Activated naive CD4-positive, alpha-beta T cell treated with anti-CD3 and anti-CD28 coated beads for 36 hours (primary cell): ENCODE measurements at regions of chr14 and their contacts with region 1.

Region 1: GRCh38 chr14:24013654-24014514 is 25.2 kb downstream of the DHRS4L2 start:
- DNase-seq: peak; percentile 66
- H3K4me3 Mint-ChIP-seq: no peak overlapping the region
- H3K27ac Mint-ChIP-seq: no peak overlapping the region
- H3K4me1 Mint-ChIP-seq: peaks cover 25% of the 10 kb centered on the region
- H3K27me3 Mint-ChIP-seq: no peaks in the 10 kb centered on the region

Region 2: DNA sequence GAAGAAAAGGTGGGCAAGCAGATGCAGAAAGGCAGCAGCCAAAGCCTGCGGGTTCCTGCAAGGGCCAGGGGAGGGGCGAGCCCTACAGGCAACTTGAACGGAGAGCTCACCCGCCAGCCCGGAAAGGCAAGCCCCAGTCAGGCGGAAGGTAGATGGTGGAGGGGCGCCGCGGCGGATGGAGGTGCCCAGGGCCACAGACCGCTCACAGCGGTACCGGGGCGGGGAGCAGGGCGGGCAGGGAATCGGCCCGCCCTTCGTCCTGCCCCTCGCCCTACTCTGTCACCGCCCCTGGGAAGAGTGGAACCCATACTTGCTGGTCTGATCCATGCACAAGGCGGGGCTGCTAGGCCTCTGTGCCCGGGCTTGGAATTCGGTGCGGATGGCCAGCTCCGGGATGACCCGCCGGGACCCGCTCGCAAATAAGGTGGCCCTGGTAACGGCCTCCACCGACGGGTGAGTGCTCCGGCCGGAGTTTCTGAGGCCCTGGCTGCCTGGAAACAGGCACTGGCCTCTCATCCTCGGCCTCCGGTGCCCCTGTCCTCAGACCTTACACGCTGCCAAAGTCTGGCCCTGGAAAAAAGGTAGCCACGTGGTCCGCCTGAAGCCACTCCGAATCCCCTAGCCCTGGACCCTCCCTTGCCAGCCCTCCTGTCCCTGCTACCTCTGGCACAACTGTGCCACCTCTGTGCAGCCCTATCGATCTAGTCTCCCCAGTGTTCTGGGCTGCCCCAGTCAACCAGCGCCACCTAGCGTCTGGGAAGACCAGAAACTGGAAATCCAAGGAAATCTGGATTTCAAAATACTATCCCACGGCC is 60.2 kb before region 1 on chr14 and contains the start of gene DHRS4:
- CTCF ChIA-PET with region 1: no interaction called
- intact Hi-C with region 1: loop called (anchors 10 kb)
- DNase-seq: peak; percentile 87
- H3K4me3 Mint-ChIP-seq: peak within 1 kb of the TSS; percentile 99
- H3K27ac Mint-ChIP-seq: peak within 1 kb of the TSS; percentile 94
- H3K4me1 Mint-ChIP-seq: peaks cover 22% of the 10 kb centered on the region
- H3K27me3 Mint-ChIP-seq: no peaks in the 10 kb centered on the region
- total RNA-seq, gene DHRS4: 22.8 to 24.0 TPM

Region 3: DNA sequence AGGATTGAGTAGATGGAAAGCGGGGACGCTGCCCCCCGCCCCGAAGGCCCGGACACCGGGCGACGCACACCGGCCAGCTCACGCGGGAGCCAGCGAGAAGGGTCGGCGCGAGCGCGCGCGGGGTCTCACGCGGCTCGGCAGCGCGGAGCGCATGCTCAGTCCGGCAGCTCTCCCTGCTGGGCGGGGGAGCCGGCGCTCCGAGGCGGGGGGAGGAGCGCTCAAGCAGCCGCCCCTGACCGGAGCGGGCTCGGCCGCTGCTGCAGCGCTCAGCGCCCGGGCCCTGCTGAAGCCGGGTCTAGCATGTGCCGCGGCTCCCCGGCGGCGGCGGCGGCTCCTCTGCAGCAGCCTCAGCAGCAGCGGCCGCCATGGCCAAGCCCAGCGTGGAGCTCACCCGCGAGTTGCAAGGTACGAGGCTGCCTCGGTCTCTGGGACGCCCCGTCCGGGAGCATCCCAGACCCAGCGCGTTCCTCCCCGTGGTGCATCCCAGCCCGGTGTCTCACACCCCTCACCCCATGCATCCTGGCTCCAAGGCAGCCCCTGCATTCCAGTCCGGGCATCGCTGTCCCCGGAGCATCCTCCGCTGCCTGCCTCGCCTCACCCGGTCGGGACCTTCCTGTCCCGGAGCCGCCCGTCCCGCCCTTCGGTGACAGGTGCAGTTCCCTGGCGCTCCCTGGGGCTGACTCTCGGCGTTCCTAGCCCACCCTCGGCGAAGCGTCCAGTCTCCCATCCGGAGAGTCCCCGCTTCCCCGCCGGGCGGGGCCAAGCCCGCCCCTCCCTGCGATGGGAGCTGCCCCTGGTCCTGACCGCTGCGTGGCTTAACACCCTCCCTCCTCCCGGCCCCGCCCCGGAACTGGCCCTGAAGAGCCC is 38.1 kb after region 1 on chr14 and contains the start of gene CARMIL3:
- CTCF ChIA-PET with region 1: interaction called, 6 read pairs
- intact Hi-C with region 1: loop called (anchors 1 kb)
- DNase-seq: peak; percentile 60
- H3K4me3 Mint-ChIP-seq: peak within 1 kb of the TSS; percentile 65
- H3K27ac Mint-ChIP-seq: peak within 1 kb of the TSS; percentile 28
- H3K4me1 Mint-ChIP-seq: peaks cover 18% of the 10 kb centered on the region
- H3K27me3 Mint-ChIP-seq: peaks cover 2% of the 10 kb centered on the region
- total RNA-seq, gene CARMIL3: 0.48 to 0.99 TPM

Region 4: DNA sequence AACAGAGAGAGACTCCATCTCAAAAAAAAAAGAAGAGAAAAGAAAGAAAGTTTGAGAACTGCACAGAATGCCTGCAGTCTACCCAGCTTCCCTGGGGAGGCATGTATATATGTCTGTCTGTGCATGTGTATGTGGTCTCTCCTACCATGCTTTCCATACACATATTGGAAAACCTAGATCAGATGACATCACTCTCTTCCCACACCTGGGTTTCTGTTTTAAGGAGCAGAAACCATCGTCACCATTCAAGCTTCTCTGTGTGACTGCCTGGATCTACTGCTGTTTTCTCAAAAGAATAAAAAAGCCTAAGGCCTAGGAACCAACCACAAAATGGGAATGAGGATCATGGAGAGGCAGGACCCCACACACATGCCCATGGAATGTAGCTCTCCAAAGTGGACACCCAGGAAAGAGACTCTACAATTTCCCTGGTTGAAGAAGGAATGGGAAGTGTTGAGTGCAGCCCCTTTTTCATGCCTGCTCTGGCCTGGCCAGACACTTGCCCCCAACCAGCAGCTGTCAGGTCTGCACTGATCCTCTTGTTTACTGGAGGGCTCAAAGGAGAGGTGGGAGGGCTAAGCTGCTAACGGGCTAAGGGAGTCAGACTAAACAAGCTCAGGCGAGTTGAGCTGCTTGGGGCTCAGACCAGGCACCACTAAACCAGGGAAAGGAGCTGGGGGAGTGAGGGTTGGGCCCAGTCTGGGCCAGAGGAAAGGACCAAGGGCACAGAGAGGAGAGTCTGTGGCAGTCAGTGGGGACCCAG is 72.5 kb after region 1 on chr14:
- CTCF ChIA-PET with region 1: interaction called, 4 read pairs
- intact Hi-C with region 1: loop called (anchors 1 kb)
- DNase-seq: no peak
- H3K4me3 Mint-ChIP-seq: no peak overlapping the region
- H3K27ac Mint-ChIP-seq: no peak overlapping the region
- H3K4me1 Mint-ChIP-seq: peaks cover 7% of the 10 kb centered on the region
- H3K27me3 Mint-ChIP-seq: no peaks in the 10 kb centered on the region

Region 5: GRCh38 chr14:24232121-24232644 is 218.3 kb after region 1 on chr14 and contains the start of gene NEDD8:
- CTCF ChIA-PET with region 1: no interaction called
- intact Hi-C with region 1: loop called (anchors 2 kb)
- DNase-seq: peak; percentile 96
- H3K4me3 Mint-ChIP-seq: peak within 1 kb of the TSS; percentile 98
- H3K27ac Mint-ChIP-seq: peak within 1 kb of the TSS; percentile 97
- H3K4me1 Mint-ChIP-seq: peaks cover 52% of the 10 kb centered on the region
- H3K27me3 Mint-ChIP-seq: no peaks in the 10 kb centered on the region
- total RNA-seq, gene NEDD8: 172 to 196 TPM